HEK293T (cell line): ENCODE measurements at regions of chr17 and their contacts with region 1.

Region 1: DNA sequence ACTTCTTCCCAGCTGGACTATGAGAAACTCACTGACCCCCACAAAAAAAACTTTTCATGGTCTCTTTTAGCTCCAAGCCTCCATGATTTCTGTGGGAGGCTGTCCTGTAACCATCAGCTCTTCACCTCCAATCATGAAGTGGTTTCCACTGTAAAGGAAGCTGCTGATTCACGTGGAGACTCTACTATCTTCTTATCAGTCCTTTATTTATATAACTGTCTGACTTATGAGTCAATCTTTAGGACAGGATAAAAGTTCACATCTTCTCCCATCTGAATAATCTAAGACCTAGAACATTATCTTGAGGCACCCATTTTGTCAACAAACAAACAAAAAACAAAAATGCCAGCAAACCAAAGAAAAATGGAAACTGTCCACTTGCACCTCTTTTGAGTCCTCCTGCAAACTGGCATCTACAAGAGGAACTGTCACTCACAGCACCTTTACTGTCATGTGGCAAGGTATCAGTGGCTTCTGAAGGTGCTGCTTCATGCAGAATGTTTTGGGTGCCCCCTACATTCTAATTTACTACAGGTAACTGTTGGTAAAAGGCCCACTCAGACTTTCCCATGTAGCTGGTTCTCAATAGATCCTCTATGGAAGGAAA is 409.8 kb downstream of the SLC39A11 start:
- DNase-seq: no peak

Region 2: GRCh38 chr17:72715906-72716572 is 33.3 kb after region 1 on chr17:
- CTCF ChIA-PET with region 1: interaction called, 12 read pairs
- POLR2A ChIA-PET with region 1: no interaction called
- DNase-seq: no peak